GM12878 (cell line): ENCODE measurements at regions of chr12 and their contacts with region 1.

Region 1: GRCh38 chr12:15910864-15911721 is at the start of gene DERA:
- DNase-seq: no peak
- ATAC-seq: peak; percentile 94
- H3K4me3 ChIP-seq: peak within 1 kb of the TSS; percentile 73
- H3K27ac ChIP-seq: peak within 1 kb of the TSS; percentile 88
- H3K4me1 ChIP-seq: no peaks in the 10 kb centered on the region
- H3K27me3 ChIP-seq: no peaks in the 10 kb centered on the region
- CTCF ChIP-seq: no peak
- EP300 ChIP-seq: no peak
- POLR2A ChIP-seq: peak; percentile 88
- RAD21 ChIP-seq: no peak
- polyA plus RNA-seq, gene DERA: 64.2 to 97.1 TPM

Region 2: DNA sequence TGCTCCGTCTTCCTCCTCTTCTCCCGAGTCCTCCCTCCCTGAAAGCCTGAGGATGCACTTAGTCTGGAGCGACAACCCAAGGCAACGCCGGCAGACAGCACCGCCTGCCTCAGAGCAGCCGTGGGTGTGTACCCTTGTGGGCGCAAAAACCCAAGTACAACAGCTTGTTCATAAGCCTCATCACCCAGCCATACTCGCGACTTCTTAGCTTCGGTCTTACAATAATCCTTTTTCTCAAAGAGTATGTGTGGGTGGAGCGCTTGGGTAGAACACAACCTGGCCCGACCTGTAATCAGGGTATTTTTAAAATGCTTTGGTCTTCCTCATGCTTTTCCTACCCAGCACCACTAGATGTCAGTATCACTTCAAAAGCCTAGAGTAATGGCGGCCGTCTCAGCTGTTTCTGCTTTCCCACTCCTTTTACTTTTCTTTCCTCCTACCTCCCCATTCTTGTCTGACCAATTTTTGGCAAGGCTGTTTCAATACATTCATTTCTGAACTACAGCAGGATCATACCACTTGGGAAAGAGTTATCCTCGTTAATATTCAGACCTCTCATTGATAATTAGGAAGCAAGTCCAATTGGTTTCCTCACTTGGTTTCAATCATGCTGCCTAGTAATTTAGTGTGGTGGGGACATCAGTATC is 320.8 kb before region 1 on chr12:
- CTCF ChIA-PET with region 1: interaction called, 10 read pairs
- POLR2A ChIA-PET with region 1: no interaction called
- RAD21 ChIA-PET with region 1: no interaction called
- SMC1A ChIA-PET with region 1: interaction called, 7 read pairs
- in situ Hi-C with region 1: no loop called
- intact Hi-C with region 1: no loop called
- DNase-seq: peak; percentile 46
- ATAC-seq: peak; percentile 97
- H3K4me3 ChIP-seq: peak overlapping the region; percentile 46; the same call in 1 of the 2 replicates
- H3K27ac ChIP-seq: no peak overlapping the region
- H3K4me1 ChIP-seq: peaks cover 4% of the 10 kb centered on the region; the same call in 1 of the 2 replicates
- H3K27me3 ChIP-seq: 0 out of 4 replicates have a peak, but pooled peaks cover 0 to 1% of the 10 kb centered on the region in 2 experiments
- CTCF ChIP-seq: peak; percentile 85 to 94 (median 86); a peak in 5 of 6 replicates
- EP300 ChIP-seq: no peak
- POLR2A ChIP-seq: no peak
- RAD21 ChIP-seq: peak; percentile 97

Region 3: GRCh38 chr12:15823360-15824128 is 87.5 kb before region 1 on chr12:
- CTCF ChIA-PET with region 1: no interaction called
- POLR2A ChIA-PET with region 1: no interaction called
- RAD21 ChIA-PET with region 1: no interaction called
- SMC1A ChIA-PET with region 1: no interaction called
- in situ Hi-C with region 1: no loop called
- intact Hi-C with region 1: no loop called
- DNase-seq: no peak
- ATAC-seq: no peak
- H3K4me3 ChIP-seq: no peak overlapping the region
- H3K27ac ChIP-seq: no peak overlapping the region
- H3K4me1 ChIP-seq: no peaks in the 10 kb centered on the region
- H3K27me3 ChIP-seq: no peaks in the 10 kb centered on the region
- CTCF ChIP-seq: no peak
- EP300 ChIP-seq: no peak
- POLR2A ChIP-seq: no peak
- RAD21 ChIP-seq: no peak

Region 4: GRCh38 chr12:15882118-15882971 is 28.7 kb before region 1 on chr12 and contains the start of gene STRAP:
- CTCF ChIA-PET with region 1: interaction called, 17 read pairs
- POLR2A ChIA-PET with region 1: interaction called, 11 read pairs
- RAD21 ChIA-PET with region 1: interaction called, 5 read pairs
- SMC1A ChIA-PET with region 1: interaction called, 34 read pairs
- in situ Hi-C with region 1: no loop called
- intact Hi-C with region 1: no loop called
- DNase-seq: peak; percentile 88
- ATAC-seq: peak; percentile 93
- H3K4me3 ChIP-seq: peak within 1 kb of the TSS; percentile 97
- H3K27ac ChIP-seq: peak within 1 kb of the TSS; percentile 90
- H3K4me1 ChIP-seq: peaks cover 4% of the 10 kb centered on the region; the same call in 1 of the 2 replicates
- H3K27me3 ChIP-seq: no peaks in the 10 kb centered on the region
- CTCF ChIP-seq: no peak
- EP300 ChIP-seq: no peak
- POLR2A ChIP-seq: peak; percentile 94
- RAD21 ChIP-seq: no peak
- polyA plus RNA-seq, gene STRAP: 102 to 227 TPM

Region 5: GRCh38 chr12:15899282-15899870 is 11.7 kb before region 1 on chr12:
- CTCF ChIA-PET with region 1: interaction called, 115 read pairs
- POLR2A ChIA-PET with region 1: interaction called, 3 read pairs
- RAD21 ChIA-PET with region 1: interaction called, 7 read pairs
- SMC1A ChIA-PET with region 1: interaction called, 33 read pairs
- in situ Hi-C with region 1: no loop called
- intact Hi-C with region 1: no loop called
- DNase-seq: no peak
- ATAC-seq: peak; percentile 76
- H3K4me3 ChIP-seq: no peak overlapping the region
- H3K27ac ChIP-seq: no peak overlapping the region
- H3K4me1 ChIP-seq: no peaks in the 10 kb centered on the region
- H3K27me3 ChIP-seq: no peaks in the 10 kb centered on the region
- CTCF ChIP-seq: peak; percentile 43 to 64 (median 57)
- EP300 ChIP-seq: no peak
- POLR2A ChIP-seq: no peak
- RAD21 ChIP-seq: peak; percentile 66

Region 6: GRCh38 chr12:15931590-15932053 is 20.5 kb after region 1 on chr12:
- CTCF ChIA-PET with region 1: interaction called, 16 read pairs
- POLR2A ChIA-PET with region 1: interaction called, 6 read pairs
- RAD21 ChIA-PET with region 1: interaction called, 13 read pairs
- SMC1A ChIA-PET with region 1: interaction called, 21 read pairs
- in situ Hi-C with region 1: no loop called
- intact Hi-C with region 1: no loop called
- DNase-seq: peak; percentile 64
- ATAC-seq: peak; percentile 80
- H3K4me3 ChIP-seq: no peak overlapping the region
- H3K27ac ChIP-seq: peak overlapping the region; percentile 20; the same call in 1 of the 2 replicates
- H3K4me1 ChIP-seq: no peaks in the 10 kb centered on the region
- H3K27me3 ChIP-seq: no peaks in the 10 kb centered on the region
- CTCF ChIP-seq: peak in 2 of 3 experiments; percentile 28 to 38; a peak in 3 of 6 replicates
- EP300 ChIP-seq: no peak
- POLR2A ChIP-seq: no peak
- RAD21 ChIP-seq: peak; percentile 38; the same call in 1 of the 2 replicates